PC-9 (cell line): ENCODE measurements at regions of chr19 and their contacts with region 1.

Region 1: GRCh38 chr19:16041299-16041990 is 34.9 kb upstream of the TPM4 start:
- DNase-seq: peak; percentile 63 to 82
- H3K4me3 ChIP-seq: no peak overlapping the region
- H3K27ac ChIP-seq: no peak overlapping the region
- H3K4me1 ChIP-seq: peaks cover 4% of the 10 kb centered on the region; the same call in 1 of the 2 replicates
- H3K27me3 ChIP-seq: no peaks in the 10 kb centered on the region
- CTCF ChIP-seq: peak; percentile 100

Region 2: DNA sequence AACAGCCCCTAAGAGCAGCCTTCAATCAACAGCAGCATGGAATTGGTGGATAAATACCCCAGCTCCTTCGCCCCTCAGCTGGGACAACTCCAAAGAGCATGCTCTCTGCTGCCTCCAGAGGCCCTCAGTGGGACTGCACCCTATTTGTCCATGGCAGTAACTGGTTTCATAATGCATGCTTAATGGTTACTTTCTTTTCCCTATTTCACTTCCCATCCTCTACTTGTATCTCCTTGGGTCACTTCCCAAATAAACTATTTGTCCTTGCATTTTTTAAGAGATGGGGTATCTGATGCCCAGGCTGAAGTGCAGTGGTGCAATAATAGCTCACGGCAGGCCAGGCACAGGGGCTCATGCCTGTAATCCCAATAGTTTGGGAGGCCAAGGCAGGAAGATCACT is 21.3 kb after region 1 on chr19:
- CTCF ChIA-PET with region 1: interaction called, 10 read pairs
- POLR2A ChIA-PET with region 1: interaction called, 14 read pairs
- intact Hi-C with region 1: no loop called
- DNase-seq: peak; percentile 59 to 61
- H3K4me3 ChIP-seq: no peak overlapping the region
- H3K27ac ChIP-seq: no peak overlapping the region
- H3K4me1 ChIP-seq: peaks cover 11% of the 10 kb centered on the region
- H3K27me3 ChIP-seq: no peaks in the 10 kb centered on the region
- CTCF ChIP-seq: peak; percentile 99

Region 3: DNA sequence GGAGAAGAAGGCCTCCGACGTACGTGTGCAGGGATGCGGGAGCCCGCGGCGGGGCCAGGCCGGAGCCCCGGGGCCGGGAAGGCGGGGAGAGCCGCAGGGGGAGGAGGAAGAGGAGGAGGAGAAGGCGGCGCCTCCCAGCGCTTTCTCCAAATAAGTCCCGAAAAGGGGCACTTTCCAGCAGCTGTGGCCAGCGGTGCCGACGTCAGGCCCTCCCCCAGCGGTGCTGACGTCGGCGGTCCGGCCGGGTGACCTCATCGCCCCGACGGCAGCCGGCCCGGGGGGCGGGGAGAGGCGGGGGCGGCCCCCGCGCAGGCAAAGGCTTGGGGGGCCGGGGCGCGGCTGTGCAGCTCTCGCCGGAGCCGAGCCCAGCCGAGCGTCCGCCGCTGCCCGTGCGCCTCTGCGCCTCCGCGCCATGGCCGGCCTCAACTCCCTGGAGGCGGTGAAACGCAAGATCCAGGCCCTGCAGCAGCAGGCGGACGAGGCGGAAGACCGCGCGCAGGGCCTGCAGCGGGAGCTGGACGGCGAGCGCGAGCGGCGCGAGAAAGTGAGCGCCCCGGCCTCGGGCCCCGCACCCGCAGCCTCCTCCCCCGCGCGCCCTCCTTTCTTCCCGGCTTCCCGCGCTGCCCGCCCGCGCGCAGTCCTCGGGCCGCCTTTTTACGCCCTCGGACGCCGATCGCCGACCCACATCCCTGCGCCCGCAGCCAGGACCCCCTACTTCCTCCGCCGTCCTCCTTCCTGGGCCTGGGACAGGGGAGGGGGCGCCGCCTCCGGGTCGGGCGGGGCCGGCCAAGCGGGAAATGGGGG is 34.9 kb after region 1 on chr19 and contains the start of gene TPM4:
- CTCF ChIA-PET with region 1: no interaction called
- POLR2A ChIA-PET with region 1: no interaction called
- intact Hi-C with region 1: loop called (anchors 5 kb)
- DNase-seq: peak; percentile 77 to 92
- H3K4me3 ChIP-seq: peak within 1 kb of the TSS; percentile 70
- H3K27ac ChIP-seq: peak within 1 kb of the TSS; percentile 99
- H3K4me1 ChIP-seq: peaks cover 43% of the 10 kb centered on the region
- H3K27me3 ChIP-seq: no peaks in the 10 kb centered on the region
- CTCF ChIP-seq: no peak
- total RNA-seq, gene TPM4: 279 and 307 TPM in 2 replicates

Region 4: DNA sequence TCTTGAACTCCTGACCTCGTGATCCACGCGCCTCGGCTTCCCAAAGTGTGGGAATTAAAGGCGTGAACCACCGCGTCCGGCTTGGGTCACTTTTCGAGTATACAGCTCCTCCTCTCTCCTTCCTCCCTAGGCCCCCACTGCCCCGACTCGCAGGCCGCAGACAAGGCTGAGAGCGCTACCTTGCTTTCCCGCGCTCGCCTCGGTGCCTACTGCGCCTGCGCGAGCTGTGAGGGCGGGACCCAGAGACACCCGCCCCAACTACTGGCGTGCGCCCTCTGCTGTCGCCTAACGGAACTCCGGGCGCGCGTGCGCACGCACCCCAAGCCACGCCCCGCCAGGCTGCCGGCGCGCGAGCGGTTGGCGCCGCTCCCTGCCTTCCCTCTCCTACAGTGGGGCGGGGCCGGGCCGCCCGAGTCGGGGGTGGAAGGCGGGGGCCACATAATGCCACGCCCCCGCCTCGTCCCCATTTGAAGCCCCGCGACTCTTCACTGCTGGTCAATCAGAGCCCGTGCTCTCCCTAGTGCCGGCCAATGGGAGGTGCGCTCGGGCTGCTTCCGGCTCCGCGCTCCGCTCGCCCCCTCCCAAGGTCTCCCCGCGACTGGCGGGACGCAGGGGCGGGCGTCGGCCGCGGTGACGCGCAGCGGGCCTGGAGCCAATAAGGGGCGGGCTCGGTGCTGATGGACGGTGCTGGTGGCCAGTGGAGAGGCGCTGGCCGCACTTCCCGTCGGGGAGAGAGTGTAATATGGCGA is 69.9 kb after region 1 on chr19 and contains the start of gene RAB8A:
- CTCF ChIA-PET with region 1: interaction called, 5 read pairs
- POLR2A ChIA-PET with region 1: no interaction called
- intact Hi-C with region 1: loop called (anchors 1 kb)
- DNase-seq: peak; percentile 97 to 99
- H3K4me3 ChIP-seq: peak within 1 kb of the TSS; percentile 97
- H3K27ac ChIP-seq: peak within 1 kb of the TSS; percentile 72
- H3K4me1 ChIP-seq: peaks cover 12% of the 10 kb centered on the region
- H3K27me3 ChIP-seq: no peaks in the 10 kb centered on the region
- CTCF ChIP-seq: peak; percentile 92
- total RNA-seq, gene RAB8A: 87.9 and 104 TPM in 2 replicates

Region 5: GRCh38 chr19:16259385-16260159 is 218.1 kb after region 1 on chr19:
- CTCF ChIA-PET with region 1: no interaction called
- POLR2A ChIA-PET with region 1: no interaction called
- intact Hi-C with region 1: no loop called
- DNase-seq: no peak
- H3K4me3 ChIP-seq: no peak overlapping the region
- H3K27ac ChIP-seq: no peak overlapping the region
- H3K4me1 ChIP-seq: no peaks in the 10 kb centered on the region
- H3K27me3 ChIP-seq: no peaks in the 10 kb centered on the region
- CTCF ChIP-seq: no peak

Region 6: DNA sequence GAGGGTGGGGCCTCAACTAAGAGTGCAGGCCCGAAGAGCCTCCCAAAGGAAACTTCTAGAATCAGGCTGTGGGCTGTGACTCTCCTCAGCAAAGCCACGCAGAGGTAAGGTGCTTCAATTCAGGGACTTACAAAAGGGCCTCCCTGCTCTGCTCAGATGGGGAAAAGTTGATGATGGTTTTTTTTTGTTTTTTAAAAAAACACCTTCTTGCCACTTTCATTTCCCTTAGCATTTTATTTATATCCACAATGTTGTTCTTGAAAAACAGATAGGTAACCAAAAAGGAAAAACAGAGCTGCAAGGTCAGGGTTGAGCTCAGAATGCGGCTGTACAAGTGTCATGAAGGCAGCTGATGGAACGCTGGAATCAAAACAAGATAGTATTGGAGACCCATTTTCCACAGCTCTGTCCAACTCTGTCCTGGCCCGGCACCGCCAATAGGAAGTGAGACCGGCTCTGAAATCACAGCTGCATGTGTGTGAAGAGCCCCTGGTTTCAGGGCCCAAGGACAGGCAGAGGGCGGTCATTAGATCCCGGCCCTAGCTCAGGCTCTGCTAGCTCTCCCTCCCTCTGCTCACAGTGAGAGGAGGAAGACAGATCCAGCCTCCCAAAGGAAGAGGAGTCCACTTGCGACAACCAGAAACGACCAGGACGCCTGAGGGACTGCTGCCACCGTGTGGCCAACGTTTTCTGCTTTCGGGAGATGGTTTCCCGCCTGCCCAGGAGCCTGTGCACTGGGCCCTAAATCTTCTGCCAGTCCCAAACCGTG is 341.5 kb after region 1 on chr19:
- CTCF ChIA-PET with region 1: interaction called, 14 read pairs
- POLR2A ChIA-PET with region 1: no interaction called
- intact Hi-C with region 1: loop called (anchors 2 kb)
- DNase-seq: peak; percentile 60 to 67
- H3K4me3 ChIP-seq: no peak overlapping the region
- H3K27ac ChIP-seq: no peak overlapping the region
- H3K4me1 ChIP-seq: no peaks in the 10 kb centered on the region
- H3K27me3 ChIP-seq: no peaks in the 10 kb centered on the region
- CTCF ChIP-seq: peak; percentile 86